ENCODE measurements at regions of chr11 and their contacts with region 1.

Region 1: GRCh38 chr11:72471005-72471898 is 36.9 kb upstream of the CLPB start:
- DNase-seq: peak in 1 of 2 donors; percentile 80
- ATAC-seq: peak; percentile 64
- H3K4me3 ChIP-seq: no peak overlapping the region
- H3K27ac ChIP-seq: no peak overlapping the region
- H3K4me1 ChIP-seq: no peaks in the 10 kb centered on the region
- H3K27me3 ChIP-seq: no peaks in the 10 kb centered on the region

Region 2: DNA sequence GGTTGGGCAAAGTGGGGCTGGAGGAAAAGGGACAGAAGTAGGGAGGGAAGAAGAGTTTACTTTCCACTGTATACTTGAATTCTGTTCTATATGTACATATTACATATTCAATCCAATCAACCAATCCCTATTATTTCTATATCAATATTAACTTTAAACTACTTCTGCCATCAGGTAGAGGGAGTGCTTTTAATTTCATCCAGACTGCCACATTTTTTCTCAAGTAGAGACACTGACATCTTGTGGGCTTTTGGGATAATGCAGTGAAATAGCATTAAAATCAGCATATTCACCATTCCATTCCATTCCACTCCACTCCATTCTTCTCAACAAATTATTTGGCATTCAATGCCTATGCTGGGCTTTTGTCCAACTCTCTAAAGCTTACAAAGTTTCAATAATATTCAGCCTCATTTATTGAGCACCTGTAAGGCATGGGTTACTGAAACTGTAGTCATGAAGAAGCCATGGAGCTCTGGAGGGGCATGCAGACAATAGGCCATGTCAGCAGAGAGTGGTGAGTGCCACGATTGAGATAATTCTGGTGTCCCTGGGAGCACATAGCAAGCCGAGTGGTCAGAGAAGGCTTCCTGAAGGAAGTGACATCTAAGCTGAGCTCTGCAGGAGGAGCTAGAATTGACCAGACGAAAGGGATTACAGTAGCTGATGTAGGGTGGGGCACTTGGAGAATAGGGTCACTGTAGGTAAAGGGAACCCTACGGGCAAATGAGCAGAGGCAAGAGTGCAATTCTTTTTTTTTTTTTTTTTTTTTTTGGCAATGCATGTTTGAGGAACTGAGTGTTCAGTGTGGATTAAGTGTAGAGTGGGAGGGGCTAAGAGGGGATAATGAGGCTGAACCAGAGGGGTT is 24.1 kb before region 1 on chr11:
- intact Hi-C with region 1: no loop called
- DNase-seq: no peak
- ATAC-seq: peak; percentile 29
- H3K4me3 ChIP-seq: no peak overlapping the region
- H3K27ac ChIP-seq: no peak overlapping the region
- H3K4me1 ChIP-seq: no peaks in the 10 kb centered on the region
- H3K27me3 ChIP-seq: no peaks in the 10 kb centered on the region

Region 3: DNA sequence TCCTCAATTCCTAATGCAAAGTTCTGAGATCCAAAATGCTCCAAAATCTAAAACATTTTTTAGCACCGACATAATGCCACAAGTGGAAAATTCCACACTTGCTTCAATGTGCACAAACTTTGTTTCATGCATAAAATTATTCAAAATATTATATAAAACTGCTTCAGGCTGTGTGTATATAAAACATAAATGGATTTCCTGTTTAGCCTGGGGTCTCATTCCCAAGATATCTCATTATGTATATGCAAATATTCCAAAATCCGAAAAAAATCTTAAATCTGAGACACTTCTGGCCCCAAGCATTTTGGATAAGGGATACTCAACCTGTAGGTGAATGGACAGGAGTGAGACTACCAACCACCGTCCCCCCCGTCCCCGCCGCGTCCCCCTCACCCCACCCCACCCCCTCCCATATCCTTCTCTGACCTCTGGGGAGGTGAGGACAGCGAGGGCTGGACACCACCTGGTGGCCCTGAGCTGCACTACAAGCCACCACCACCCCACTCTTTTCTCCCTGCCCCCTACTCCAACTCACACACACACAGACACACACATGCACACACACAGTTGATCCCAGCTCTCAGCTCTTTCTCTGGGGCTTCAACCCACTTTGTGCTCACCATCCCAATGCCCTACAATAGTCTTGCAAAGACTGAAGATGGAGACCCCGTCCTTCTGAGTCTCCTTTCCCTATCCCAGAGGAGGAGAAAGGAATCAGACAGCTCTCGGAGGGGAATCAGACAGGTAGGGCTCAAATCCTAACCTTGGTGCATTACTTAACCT is 102.0 kb after region 1 on chr11:
- intact Hi-C with region 1: loop called in 1 of 2 experiments (anchors 5 kb)
- DNase-seq: peak in 1 of 2 donors; percentile 34
- ATAC-seq: no peak
- H3K4me3 ChIP-seq: no peak overlapping the region
- H3K27ac ChIP-seq: no peak overlapping the region
- H3K4me1 ChIP-seq: no peaks in the 10 kb centered on the region
- H3K27me3 ChIP-seq: no peaks in the 10 kb centered on the region

Region 4: GRCh38 chr11:72683782-72684200 is 212.5 kb after region 1 on chr11:
- intact Hi-C with region 1: loop called (anchors 5 kb)
- DNase-seq: peak; percentile 72 to 92
- ATAC-seq: peak; percentile 78
- H3K4me3 ChIP-seq: no peak overlapping the region
- H3K27ac ChIP-seq: no peak overlapping the region
- H3K4me1 ChIP-seq: no peaks in the 10 kb centered on the region
- H3K27me3 ChIP-seq: no peaks in the 10 kb centered on the region